ENCODE measurements at regions of chrX and their contacts with region 1.

Region 1: DNA sequence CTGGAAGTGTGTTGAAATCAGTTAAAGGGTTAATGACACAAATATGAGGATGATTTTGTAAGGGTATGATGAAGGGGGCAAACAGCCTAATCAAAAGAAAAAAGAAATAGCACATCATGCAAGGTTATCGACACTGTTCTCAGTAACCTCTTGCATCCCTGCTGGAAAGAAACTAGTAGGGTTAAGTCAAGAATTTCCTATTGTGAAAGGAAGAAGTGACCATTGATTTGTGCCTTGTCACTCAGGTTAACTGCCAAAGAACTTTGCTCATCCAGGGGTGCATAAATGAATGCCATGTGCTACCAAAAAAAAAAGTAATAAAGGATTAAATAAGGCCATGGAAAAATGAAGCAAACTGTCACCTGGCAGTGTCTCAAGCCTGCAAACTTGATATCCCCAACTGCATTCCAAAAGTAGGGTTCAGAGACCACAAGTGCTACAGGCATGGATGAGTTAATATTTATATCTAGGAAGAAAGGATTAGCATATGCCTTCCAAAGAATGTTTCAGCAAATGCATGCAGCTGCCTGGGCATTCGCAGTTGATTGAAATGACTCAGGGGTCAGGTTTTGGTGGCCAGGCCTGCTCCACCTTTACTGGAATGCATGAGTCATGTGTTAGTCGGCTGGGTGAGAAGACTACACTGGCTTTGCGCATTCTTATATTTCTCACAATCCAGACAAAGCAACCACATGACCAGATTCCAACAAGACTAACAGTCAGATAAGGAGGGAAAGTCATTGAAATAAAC is 78.4 kb upstream of the ATXN3L start:
- DNase-seq: peak; percentile 98
- H3K4me3 Mint-ChIP-seq: peak overlapping the region; percentile 10
- H3K27ac Mint-ChIP-seq: peak overlapping the region; percentile 83
- H3K4me1 Mint-ChIP-seq: peaks cover 33% of the 10 kb centered on the region
- H3K27me3 Mint-ChIP-seq: peaks cover 11% of the 10 kb centered on the region
- CTCF ChIP-seq: no peak

Region 2: DNA sequence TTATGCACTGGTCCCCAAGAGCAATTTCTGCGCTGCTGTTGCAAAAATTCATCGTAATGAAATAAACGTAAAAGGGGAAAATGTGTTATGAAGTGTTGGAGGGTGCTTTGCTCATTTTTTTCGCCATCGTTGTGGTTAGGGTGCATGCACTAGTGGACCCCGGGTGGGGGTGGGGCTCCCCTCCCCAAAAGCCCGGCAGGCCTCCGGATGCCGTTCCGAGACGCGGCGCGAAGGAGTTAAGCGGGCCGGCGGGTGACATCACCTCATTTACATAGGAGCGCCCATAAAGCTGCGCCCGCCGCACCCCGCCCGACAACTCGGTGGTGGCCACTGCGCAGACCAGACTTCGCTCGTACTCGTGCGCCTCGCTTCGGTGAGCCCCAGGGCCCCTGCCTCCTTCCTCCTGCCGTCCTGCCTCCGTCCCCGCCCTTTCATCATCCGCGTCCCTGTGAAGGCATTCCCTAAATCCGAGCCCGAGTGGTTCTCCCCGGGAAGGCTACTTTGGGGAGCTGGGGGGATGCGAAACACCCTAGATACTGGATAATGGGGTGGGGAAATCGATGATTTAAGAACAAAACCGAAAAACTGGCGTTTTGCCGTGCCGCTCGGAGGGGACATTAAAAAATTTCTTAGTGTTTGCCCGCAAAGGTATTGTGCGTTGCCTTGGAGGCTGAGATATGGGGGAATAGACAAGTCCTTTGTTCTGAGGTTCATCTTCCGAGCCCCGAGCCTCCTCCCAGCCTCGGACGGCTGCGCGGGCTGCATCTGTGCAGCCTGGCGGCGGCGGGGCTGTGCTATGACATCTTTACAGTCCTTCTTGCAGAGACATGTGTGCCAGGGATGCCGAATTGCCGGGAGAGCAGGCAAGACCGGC is 423.2 kb before region 1 on chrX and contains the start of gene TMSB4X:
- CTCF ChIA-PET with region 1: no interaction called
- POLR2A ChIA-PET with region 1: interaction called, 3 read pairs
- intact Hi-C with region 1: loop called (anchors 2 kb)
- DNase-seq: peak; percentile 75
- H3K4me3 Mint-ChIP-seq: peak within 1 kb of the TSS; percentile 88
- H3K27ac Mint-ChIP-seq: peak within 1 kb of the TSS; percentile 84
- H3K4me1 Mint-ChIP-seq: peaks cover 8% of the 10 kb centered on the region
- H3K27me3 Mint-ChIP-seq: peaks cover 18% of the 10 kb centered on the region
- CTCF ChIP-seq: no peak
- total RNA-seq, gene TMSB4X: 801 and 901 TPM in 2 replicates

Region 3: DNA sequence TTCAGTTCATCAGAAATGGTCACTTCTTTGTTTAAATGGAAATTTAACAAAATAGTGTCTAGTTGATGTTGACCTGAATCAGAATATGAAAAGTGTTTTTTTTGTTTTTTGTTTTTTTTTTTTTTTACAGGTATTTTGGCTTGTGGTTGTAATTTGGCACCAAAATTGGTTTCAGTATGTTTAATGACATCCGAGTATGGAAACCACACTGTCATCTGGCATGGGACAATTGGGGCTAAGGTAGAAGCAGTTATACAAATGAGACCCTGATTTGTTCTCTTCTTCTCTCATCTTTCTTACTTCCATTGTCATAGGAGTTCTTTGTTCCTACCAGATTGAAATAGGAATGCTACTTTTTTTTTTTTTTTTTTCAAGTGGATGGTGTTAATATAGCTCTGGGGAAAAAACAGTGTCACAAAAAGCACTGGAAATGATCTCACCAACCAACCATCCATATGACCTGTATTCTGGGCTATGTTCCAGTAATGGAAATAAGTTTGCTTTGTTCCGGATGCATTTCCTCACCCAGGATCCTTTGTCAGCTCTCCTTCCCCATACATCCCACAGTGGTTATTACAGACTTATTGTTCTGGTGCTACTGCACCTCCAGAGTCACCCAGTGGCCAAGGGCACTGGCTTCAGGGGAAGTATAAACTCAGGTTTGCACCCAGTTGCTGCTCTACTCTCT is 174.2 kb before region 1 on chrX:
- CTCF ChIA-PET with region 1: no interaction called
- POLR2A ChIA-PET with region 1: no interaction called
- intact Hi-C with region 1: loop called (anchors 5 kb)
- DNase-seq: peak; percentile 95
- H3K4me3 Mint-ChIP-seq: no peak overlapping the region
- H3K27ac Mint-ChIP-seq: peak overlapping the region; percentile 67
- H3K4me1 Mint-ChIP-seq: peaks cover 16% of the 10 kb centered on the region
- H3K27me3 Mint-ChIP-seq: peaks cover 20% of the 10 kb centered on the region
- CTCF ChIP-seq: no peak

Region 4: DNA sequence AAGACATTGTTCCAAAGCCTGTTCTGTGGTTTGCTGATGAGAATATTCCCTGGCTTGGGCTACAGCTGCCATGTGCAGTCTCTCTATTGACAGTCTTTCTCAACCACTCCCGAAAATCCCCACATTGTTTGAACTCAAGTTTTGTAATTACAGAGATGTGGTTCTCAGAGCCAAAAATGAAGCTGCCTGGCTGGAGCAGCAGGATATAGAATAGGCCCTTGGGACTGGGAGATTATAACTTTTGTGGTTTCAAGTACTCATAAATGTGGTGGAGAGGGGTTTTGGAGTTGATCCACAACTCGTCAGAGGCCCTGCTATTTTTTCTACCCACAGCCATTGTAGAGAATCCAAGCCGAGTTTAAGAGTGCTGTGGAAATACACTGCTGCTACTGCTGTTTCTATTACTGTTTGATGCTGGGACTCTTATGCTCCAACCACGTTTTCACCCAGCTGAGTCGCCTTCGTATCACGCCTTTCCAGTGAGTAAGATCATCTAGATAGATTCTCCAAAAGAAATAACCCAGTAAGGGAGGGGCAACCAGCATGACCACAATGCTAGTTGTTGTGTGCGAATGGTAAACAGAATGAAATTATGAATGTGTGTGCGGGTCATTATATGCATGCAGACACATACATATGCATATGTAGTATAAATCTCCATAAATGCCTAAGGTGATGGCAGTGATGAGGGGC is 21.2 kb before region 1 on chrX:
- CTCF ChIA-PET with region 1: no interaction called
- POLR2A ChIA-PET with region 1: no interaction called
- intact Hi-C with region 1: loop called (anchors 1 kb)
- DNase-seq: peak; percentile 86
- H3K4me3 Mint-ChIP-seq: no peak overlapping the region
- H3K27ac Mint-ChIP-seq: peak overlapping the region; percentile 76
- H3K4me1 Mint-ChIP-seq: peaks cover 15% of the 10 kb centered on the region
- H3K27me3 Mint-ChIP-seq: peaks cover 3% of the 10 kb centered on the region
- CTCF ChIP-seq: no peak

Region 5: DNA sequence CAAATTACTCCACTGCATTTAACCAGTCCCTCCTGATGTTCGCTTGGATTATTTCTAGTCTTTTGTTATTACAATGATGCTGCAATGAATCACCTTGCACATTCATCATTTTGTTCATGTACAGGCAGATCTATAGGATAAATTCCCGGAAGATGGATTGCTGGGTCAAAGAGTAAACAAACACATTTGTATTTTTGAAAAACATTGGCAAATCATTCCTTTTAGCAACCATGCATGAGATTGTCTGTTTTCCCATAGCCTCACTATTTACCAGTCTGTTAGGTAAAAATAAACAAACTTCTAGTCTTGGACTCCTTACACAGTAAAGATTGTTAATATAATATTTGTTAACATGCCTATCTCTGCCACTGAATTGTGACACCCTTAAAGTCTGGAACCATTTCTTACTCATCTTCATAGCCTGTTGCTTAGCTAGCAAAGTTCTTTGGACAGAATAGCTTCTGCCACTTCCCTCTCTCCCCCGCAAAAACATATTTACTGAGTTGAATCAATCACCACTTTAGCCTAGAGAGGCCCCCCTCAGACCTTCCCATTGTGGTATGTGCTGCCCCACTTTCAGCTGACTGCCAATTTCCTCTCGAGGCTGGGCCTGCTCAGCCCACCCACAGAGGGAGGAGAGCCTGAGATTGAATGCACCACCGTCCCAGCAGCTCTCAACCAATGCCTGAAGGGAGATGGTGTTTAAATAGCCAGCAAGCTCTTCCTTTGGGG is 30.0 kb after region 1 on chrX:
- CTCF ChIA-PET with region 1: interaction called, 3 read pairs
- POLR2A ChIA-PET with region 1: interaction called, 18 read pairs
- intact Hi-C with region 1: loop called (anchors 1 kb)
- DNase-seq: peak; percentile 96
- H3K4me3 Mint-ChIP-seq: no peak overlapping the region
- H3K27ac Mint-ChIP-seq: peak overlapping the region; percentile 37
- H3K4me1 Mint-ChIP-seq: peaks cover 28% of the 10 kb centered on the region
- H3K27me3 Mint-ChIP-seq: no peaks in the 10 kb centered on the region
- CTCF ChIP-seq: no peak